ENCODE measurements at regions of chr22 and their contacts with region 1.

Region 1: GRCh38 chr22:40443732-40444131 is 73.3 kb downstream of the SGSM3 start:
- DNase-seq: no peak
- ATAC-seq: no peak
- H3K4me3 ChIP-seq: no peak overlapping the region
- H3K4me3 Mint-ChIP-seq: no peak overlapping the region
- H3K27ac ChIP-seq: no peak overlapping the region
- H3K27ac Mint-ChIP-seq: peak overlapping the region in 1 of 2 donors; percentile 9
- H3K4me1 ChIP-seq: peaks cover 26% of the 10 kb centered on the region
- H3K4me1 Mint-ChIP-seq: peaks cover 51 to 68% of the 10 kb centered on the region in 2 donors
- H3K27me3 ChIP-seq: no peaks in the 10 kb centered on the region
- H3K27me3 Mint-ChIP-seq: no peaks in the 10 kb centered on the region
- CTCF ChIP-seq: no peak

Region 2: GRCh38 chr22:40243891-40244290 is 199.8 kb before region 1 on chr22:
- intact Hi-C with region 1: no loop called
- DNase-seq: peak in 1 of 2 donors; percentile 64
- ATAC-seq: no peak
- H3K4me3 ChIP-seq: no peak overlapping the region
- H3K4me3 Mint-ChIP-seq: peak overlapping the region; percentile 81
- H3K27ac ChIP-seq: no peak overlapping the region
- H3K27ac Mint-ChIP-seq: peak overlapping the region in 1 of 2 donors; percentile 73
- H3K4me1 ChIP-seq: peaks cover 65% of the 10 kb centered on the region
- H3K4me1 Mint-ChIP-seq: peaks cover 65 to 84% of the 10 kb centered on the region in 2 donors
- H3K27me3 ChIP-seq: no peaks in the 10 kb centered on the region
- H3K27me3 Mint-ChIP-seq: no peaks in the 10 kb centered on the region
- CTCF ChIP-seq: no peak

Region 3: DNA sequence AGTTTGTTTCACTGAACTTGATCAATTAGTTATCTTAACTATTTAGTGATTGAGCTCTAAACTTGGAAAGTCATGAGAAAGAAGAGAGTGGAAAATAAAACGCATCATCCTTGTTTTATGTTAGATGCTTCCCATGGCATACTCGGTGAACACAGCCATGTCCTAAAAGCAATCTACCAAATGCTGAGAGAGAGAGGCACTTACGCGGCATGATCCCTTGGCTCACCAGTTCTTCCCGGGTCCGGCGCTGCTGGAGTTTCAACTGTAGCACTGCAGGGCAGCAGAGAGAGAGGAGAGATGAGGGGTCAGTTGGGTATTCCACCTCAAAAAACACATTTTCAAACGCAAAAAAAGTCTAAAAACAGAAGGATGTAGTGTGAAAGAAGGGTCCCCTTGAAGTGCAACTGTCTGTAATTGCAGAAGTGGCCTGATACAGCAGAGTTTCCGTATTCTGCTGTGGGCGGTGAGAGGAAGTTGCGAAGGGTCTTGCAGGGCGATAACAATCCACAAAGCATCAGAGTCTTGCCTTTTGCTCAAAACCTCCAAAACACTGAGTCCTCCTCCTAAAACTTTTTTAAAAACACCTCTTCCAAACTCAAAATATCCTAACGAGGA is 19.4 kb after region 1 on chr22:
- intact Hi-C with region 1: loop called (anchors 2 kb)
- DNase-seq: peak; percentile 26 to 74
- ATAC-seq: peak; percentile 75 to 80 (median 78)
- H3K4me3 ChIP-seq: peak overlapping the region; percentile 53
- H3K4me3 Mint-ChIP-seq: peak overlapping the region; percentile 91
- H3K27ac ChIP-seq: peak overlapping the region; percentile 72
- H3K27ac Mint-ChIP-seq: peak overlapping the region; percentile 89 to 94
- H3K4me1 ChIP-seq: peaks cover 28% of the 10 kb centered on the region
- H3K4me1 Mint-ChIP-seq: peaks cover 52 to 60% of the 10 kb centered on the region in 2 donors
- H3K27me3 ChIP-seq: no peaks in the 10 kb centered on the region
- H3K27me3 Mint-ChIP-seq: no peaks in the 10 kb centered on the region
- CTCF ChIP-seq: no peak

Measured in natural killer cell (primary cell).